ENCODE measurements at regions of chr1 and their contacts with region 1.

Region 1: GRCh38 chr1:8015036-8015808 is 10.9 kb downstream of the ERRFI1 start:
- DNase-seq: peak; percentile 62
- ATAC-seq: peak; percentile 65
- H3K4me3 Mint-ChIP-seq: no peak overlapping the region
- H3K27ac Mint-ChIP-seq: no peak overlapping the region
- H3K4me1 Mint-ChIP-seq: no peaks in the 10 kb centered on the region
- H3K27me3 Mint-ChIP-seq: peaks cover 19% of the 10 kb centered on the region

Region 2: DNA sequence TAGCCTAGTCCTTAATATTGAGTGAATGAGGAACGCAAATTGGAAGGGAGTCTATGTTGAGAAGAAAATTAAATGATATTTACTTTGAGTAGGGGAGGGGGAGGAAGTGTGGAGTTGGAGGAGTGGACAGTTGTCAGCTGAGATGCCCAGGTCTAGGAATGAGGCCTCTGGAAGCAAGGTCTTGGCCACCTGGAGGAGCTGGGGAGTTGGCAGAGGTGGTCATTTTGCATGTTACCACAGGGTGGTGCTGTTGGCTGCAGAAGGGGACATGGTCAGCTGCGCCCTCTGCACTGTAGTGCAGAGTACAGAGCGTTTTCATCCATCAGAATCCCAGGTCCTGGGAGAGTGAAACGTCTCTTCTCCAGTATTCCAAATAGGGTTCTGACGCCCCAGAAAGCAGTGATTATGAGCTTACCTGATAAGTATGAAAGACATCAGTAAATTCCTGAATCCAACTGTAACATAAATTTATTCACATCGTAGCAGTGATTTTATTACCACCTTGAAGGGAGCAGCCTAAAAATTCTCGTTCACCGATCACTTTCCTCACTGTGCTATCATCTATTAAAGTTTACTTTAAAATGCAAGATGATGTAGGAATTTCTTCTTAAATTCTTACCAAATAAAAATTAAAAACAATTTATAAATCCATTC is 39.9 kb before region 1 on chr1:
- CTCF ChIA-PET with region 1: interaction called, 16 read pairs
- POLR2A ChIA-PET with region 1: no interaction called
- DNase-seq: peak; percentile 48
- ATAC-seq: peak; percentile 58
- H3K4me3 Mint-ChIP-seq: no peak overlapping the region
- H3K27ac Mint-ChIP-seq: no peak overlapping the region
- H3K4me1 Mint-ChIP-seq: peaks cover 6% of the 10 kb centered on the region
- H3K27me3 Mint-ChIP-seq: no peaks in the 10 kb centered on the region

Region 3: GRCh38 chr1:8025341-8026144 is 10.3 kb after region 1 on chr1:
- CTCF ChIA-PET with region 1: interaction called, 18 read pairs
- POLR2A ChIA-PET with region 1: interaction called, 3 read pairs
- DNase-seq: no peak
- ATAC-seq: peak; percentile 35
- H3K4me3 Mint-ChIP-seq: peak overlapping the region; percentile 65
- H3K27ac Mint-ChIP-seq: no peak overlapping the region
- H3K4me1 Mint-ChIP-seq: peaks cover 10% of the 10 kb centered on the region
- H3K27me3 Mint-ChIP-seq: peaks cover 53% of the 10 kb centered on the region

Region 4: GRCh38 chr1:8047681-8048445 is 32.6 kb after region 1 on chr1:
- CTCF ChIA-PET with region 1: no interaction called
- POLR2A ChIA-PET with region 1: no interaction called
- DNase-seq: no peak
- ATAC-seq: no peak
- H3K4me3 Mint-ChIP-seq: no peak overlapping the region
- H3K27ac Mint-ChIP-seq: no peak overlapping the region
- H3K4me1 Mint-ChIP-seq: no peaks in the 10 kb centered on the region
- H3K27me3 Mint-ChIP-seq: peaks cover 5% of the 10 kb centered on the region

Region 5: GRCh38 chr1:8165595-8166360 is 150.6 kb after region 1 on chr1:
- CTCF ChIA-PET with region 1: interaction called, 13 read pairs
- POLR2A ChIA-PET with region 1: no interaction called
- DNase-seq: no peak
- ATAC-seq: no peak
- H3K4me3 Mint-ChIP-seq: no peak overlapping the region
- H3K27ac Mint-ChIP-seq: no peak overlapping the region
- H3K4me1 Mint-ChIP-seq: peaks cover 34% of the 10 kb centered on the region
- H3K27me3 Mint-ChIP-seq: peaks cover 9% of the 10 kb centered on the region

Region 6: GRCh38 chr1:8348777-8349491 is 333.7 kb after region 1 on chr1:
- CTCF ChIA-PET with region 1: interaction called, 105 read pairs
- POLR2A ChIA-PET with region 1: no interaction called
- DNase-seq: peak; percentile 74
- ATAC-seq: peak; percentile 85
- H3K4me3 Mint-ChIP-seq: no peak overlapping the region
- H3K27ac Mint-ChIP-seq: no peak overlapping the region
- H3K4me1 Mint-ChIP-seq: peaks cover 2% of the 10 kb centered on the region
- H3K27me3 Mint-ChIP-seq: peaks cover 4% of the 10 kb centered on the region

Measured in activated CD8-positive, alpha-beta T cell treated with anti-CD3 and anti-CD28 coated beads, Interleukin-2, amount 10 ng/mL, durations not matched to agents 7 days and 5 days (primary cell).